Sigmoid colon (tissue), 7 donors: ENCODE measurements at regions of chr4 and their contacts with region 1.

Region 1: DNA sequence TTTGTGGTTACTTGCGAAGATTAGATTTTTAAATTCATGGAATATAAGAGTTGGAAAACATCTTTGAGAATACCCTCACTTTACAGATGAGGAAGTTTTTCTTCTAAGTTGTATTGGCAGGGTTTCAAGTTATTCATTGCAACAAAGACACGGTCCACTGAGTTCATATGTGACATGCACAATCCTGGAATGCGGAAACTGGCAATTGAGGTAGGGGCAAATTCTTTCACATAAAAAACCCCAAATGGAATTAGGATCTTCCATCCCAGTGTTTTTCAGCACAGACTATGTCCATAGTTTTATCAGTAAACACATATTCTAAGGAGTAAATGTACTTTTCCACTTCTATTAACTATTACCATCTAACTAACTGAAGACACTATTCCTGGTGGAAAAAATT is 81.8 kb upstream of the NAP1L5 start:
- DNase-seq: no peak
- H3K4me3 ChIP-seq: no peak overlapping the region
- H3K27ac ChIP-seq: no peak overlapping the region
- H3K4me1 ChIP-seq: no peaks in the 10 kb centered on the region
- H3K27me3 ChIP-seq: no peaks in the 10 kb centered on the region
- CTCF ChIP-seq: no peak
- EP300 ChIP-seq: no peak
- POLR2A ChIP-seq: no peak

Region 2: GRCh38 chr4:88953400-88953799 is 174.0 kb after region 1 on chr4:
- intact Hi-C with region 1: no loop called
- DNase-seq: no peak
- H3K4me3 ChIP-seq: no peak overlapping the region
- H3K27ac ChIP-seq: no peak overlapping the region
- H3K4me1 ChIP-seq: peaks cover 0 to 5% (median 1%) of the 10 kb centered on the region in 4 donors
- H3K27me3 ChIP-seq: no peaks in the 10 kb centered on the region
- CTCF ChIP-seq: no peak
- EP300 ChIP-seq: no peak
- POLR2A ChIP-seq: no peak

Region 3: DNA sequence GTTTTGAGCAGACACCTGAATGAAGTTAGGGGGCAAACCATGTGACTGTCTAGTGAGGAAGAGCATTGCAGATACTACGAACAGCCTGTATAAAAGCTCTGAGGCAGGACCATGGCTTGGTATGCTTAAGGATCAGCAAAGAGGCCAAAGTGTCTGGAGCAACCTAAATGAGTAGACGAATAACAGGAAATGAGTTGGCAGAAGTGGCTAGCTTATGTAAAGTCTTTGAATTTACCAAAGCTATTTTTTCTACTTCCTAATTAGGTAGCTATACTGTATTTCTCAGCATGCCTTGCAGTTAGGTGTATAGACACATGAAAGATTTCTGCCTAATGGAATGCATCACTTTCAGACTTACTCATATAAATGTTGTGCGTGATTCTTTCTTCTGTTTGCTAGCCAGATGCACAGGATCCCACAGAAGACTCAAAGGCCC is 537.5 kb after region 1 on chr4:
- intact Hi-C with region 1: loop called (anchors 10 kb)
- DNase-seq: no peak
- H3K4me3 ChIP-seq: no peak overlapping the region
- H3K27ac ChIP-seq: peak overlapping the region in 1 of 4 donors; percentile 26
- H3K4me1 ChIP-seq: peaks cover 0 to 14% (median 3%) of the 10 kb centered on the region in 4 donors
- H3K27me3 ChIP-seq: no peaks in the 10 kb centered on the region
- CTCF ChIP-seq: no peak
- EP300 ChIP-seq: no peak
- POLR2A ChIP-seq: no peak